ENCODE measurements at regions of chr1 and their contacts with region 1.

Region 1: GRCh38 chr1:170531758-170532657 is at the start of gene GORAB:
- DNase-seq: peak; percentile 85
- ATAC-seq: peak; percentile 99
- H3K4me3 ChIP-seq: peak within 1 kb of the TSS; percentile 76 to 96 (median 77)
- H3K27ac ChIP-seq: peak within 1 kb of the TSS; percentile 90
- H3K4me1 ChIP-seq: peaks cover 38% of the 10 kb centered on the region
- H3K27me3 ChIP-seq: no peaks in the 10 kb centered on the region; a peak in 1 of 5 replicates
- CTCF ChIP-seq: no peak
- EP300 ChIP-seq: peak in 1 of 2 experiments; percentile 5; a peak in 1 of 4 replicates
- POLR2A ChIP-seq: peak; percentile 89 to 93
- RAD21 ChIP-seq: no peak
- total RNA-seq, gene GORAB: 7.3 and 9.2 TPM in 2 replicates

Region 2: DNA sequence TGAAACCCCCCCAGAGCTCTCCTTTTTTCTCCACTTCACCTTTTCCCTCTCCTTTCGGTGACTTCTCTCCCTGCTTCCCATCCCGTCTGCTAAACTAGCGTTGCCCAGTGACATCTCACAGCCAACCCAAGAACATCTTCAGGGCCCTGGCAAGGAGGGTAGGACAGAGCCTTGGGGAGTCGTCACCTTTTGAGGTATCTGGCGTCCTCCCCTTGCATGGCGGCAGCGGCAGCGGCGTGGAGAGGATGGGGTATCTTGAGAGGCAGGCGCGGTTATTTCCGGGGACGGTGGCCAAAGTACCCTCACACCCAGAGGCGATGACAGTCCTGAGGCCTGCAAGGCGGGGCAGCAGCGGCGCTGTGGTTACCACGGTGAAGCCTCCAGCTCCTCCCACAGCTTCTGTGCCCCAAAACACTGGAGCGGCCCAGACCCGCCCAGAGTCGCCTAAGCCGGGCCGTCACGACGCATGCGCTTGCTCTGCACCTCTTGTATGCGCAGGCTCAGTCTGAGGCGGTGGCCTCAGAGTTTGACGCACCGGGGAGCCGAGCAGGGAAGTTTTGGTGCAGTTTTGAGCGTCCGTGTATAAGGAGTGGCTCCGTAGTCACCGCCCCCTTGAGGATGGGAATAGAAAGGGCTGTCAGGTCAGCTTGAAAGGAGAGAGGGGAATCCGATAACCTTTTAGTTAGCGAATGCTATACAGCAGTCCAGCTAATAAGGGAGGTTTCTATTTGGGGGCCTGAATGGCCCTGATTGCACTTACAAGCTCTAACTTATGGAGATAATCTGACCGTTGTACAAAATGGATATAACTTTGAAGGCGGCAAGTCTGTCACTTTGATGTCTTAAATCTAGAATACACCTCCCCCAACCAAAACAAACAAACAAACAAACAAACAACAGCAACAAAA is 457.5 kb before region 1 on chr1 and contains the start of gene KIFAP3:
- CTCF ChIA-PET with region 1: no interaction called
- POLR2A ChIA-PET with region 1: no interaction called
- in situ Hi-C with region 1: no loop called
- intact Hi-C with region 1: loop called (anchors 2 kb)
- DNase-seq: peak; percentile 97
- ATAC-seq: peak; percentile 99
- H3K4me3 ChIP-seq: peak within 1 kb of the TSS; percentile 68 to 91 (median 80)
- H3K27ac ChIP-seq: peak within 1 kb of the TSS; percentile 53
- H3K4me1 ChIP-seq: peaks cover 15% of the 10 kb centered on the region
- H3K27me3 ChIP-seq: no peaks in the 10 kb centered on the region; a peak in 1 of 5 replicates
- CTCF ChIP-seq: peak; percentile 78
- EP300 ChIP-seq: no peak
- POLR2A ChIP-seq: peak in 1 of 2 experiments; percentile 40; a peak in 2 of 4 replicates
- RAD21 ChIP-seq: no peak
- total RNA-seq, gene KIFAP3: 10.0 and 13.1 TPM in 2 replicates

Region 3: GRCh38 chr1:170513138-170513537 is 18.9 kb before region 1 on chr1:
- CTCF ChIA-PET with region 1: no interaction called
- POLR2A ChIA-PET with region 1: no interaction called
- in situ Hi-C with region 1: no loop called
- intact Hi-C with region 1: no loop called
- DNase-seq: no peak
- ATAC-seq: peak; percentile 66
- H3K4me3 ChIP-seq: no peak overlapping the region
- H3K27ac ChIP-seq: no peak overlapping the region
- H3K4me1 ChIP-seq: no peaks in the 10 kb centered on the region
- H3K27me3 ChIP-seq: no peaks in the 10 kb centered on the region
- CTCF ChIP-seq: no peak
- EP300 ChIP-seq: no peak
- POLR2A ChIP-seq: no peak
- RAD21 ChIP-seq: no peak

Measured in HepG2 (cell line).